CD4-positive, alpha-beta memory T cell (primary cell): ENCODE measurements at regions of chr5 and their contacts with region 1.

Region 1: DNA sequence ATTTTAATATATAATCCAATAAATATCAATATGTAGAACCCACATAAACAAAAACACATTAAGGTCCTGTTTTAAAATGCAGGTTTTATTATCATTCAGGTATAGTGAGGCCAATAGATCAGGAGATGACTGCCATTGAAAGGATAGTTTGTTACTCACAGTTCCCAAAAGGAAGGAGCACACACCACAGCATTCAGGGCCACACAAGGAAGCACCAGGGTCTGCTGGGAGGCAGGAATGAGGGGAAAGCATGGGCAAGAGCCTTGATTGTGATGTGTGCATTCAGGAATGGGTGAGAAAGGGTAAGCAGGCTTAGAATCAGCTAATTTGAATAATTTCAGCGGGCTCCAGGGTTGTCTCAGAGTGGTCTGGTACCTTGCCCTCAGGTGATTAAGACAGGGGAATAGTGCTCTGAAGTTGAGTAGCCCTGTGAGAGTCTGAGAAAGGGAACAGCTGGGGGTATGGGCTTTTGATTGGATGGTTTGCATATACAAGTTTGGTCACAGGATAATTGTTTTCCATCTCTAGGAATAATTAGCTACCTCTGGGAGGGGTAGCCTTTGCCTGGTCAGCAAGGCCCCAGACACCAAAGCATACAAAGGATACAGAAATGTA is 19.8 kb upstream of the OTULIN start:
- DNase-seq: no peak
- H3K4me3 ChIP-seq: no peak overlapping the region
- H3K4me3 Mint-ChIP-seq: no peak overlapping the region
- H3K27ac ChIP-seq: no peak overlapping the region
- H3K27ac Mint-ChIP-seq: no peak overlapping the region
- H3K4me1 ChIP-seq: no peaks in the 10 kb centered on the region
- H3K4me1 Mint-ChIP-seq: no peaks in the 10 kb centered on the region
- H3K27me3 ChIP-seq: peaks cover 4% of the 10 kb centered on the region
- H3K27me3 Mint-ChIP-seq: peaks cover 15 to 27% of the 10 kb centered on the region in 2 donors

Region 2: DNA sequence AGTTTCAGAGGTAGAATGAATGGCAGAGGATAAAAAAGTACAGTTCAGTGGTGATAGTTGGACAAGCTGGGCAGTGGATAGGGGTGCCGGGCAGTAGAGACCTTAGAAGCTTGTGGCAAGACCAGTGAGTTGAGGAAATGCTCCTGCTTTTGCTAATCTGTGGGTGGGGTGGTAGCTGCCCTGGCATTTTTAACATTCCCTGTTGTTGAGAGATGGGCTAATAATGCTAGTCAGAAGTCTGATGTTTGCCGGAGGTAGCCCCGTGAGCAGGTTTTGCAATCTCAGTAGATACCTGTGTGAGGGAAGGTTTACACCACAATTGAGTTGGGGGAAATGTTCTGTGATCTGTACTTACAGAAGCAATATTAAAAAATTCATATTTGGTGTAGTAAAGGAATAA is 410.5 kb before region 1 on chr5:
- CTCF ChIA-PET with region 1: no interaction called
- POLR2A ChIA-PET with region 1: no interaction called
- intact Hi-C with region 1: no loop called
- DNase-seq: no peak
- H3K4me3 ChIP-seq: no peak overlapping the region
- H3K4me3 Mint-ChIP-seq: no peak overlapping the region
- H3K27ac ChIP-seq: no peak overlapping the region
- H3K27ac Mint-ChIP-seq: no peak overlapping the region
- H3K4me1 ChIP-seq: no peaks in the 10 kb centered on the region
- H3K4me1 Mint-ChIP-seq: no peaks in the 10 kb centered on the region
- H3K27me3 ChIP-seq: no peaks in the 10 kb centered on the region
- H3K27me3 Mint-ChIP-seq: peaks cover 2 to 3% of the 10 kb centered on the region in 2 donors

Region 3: DNA sequence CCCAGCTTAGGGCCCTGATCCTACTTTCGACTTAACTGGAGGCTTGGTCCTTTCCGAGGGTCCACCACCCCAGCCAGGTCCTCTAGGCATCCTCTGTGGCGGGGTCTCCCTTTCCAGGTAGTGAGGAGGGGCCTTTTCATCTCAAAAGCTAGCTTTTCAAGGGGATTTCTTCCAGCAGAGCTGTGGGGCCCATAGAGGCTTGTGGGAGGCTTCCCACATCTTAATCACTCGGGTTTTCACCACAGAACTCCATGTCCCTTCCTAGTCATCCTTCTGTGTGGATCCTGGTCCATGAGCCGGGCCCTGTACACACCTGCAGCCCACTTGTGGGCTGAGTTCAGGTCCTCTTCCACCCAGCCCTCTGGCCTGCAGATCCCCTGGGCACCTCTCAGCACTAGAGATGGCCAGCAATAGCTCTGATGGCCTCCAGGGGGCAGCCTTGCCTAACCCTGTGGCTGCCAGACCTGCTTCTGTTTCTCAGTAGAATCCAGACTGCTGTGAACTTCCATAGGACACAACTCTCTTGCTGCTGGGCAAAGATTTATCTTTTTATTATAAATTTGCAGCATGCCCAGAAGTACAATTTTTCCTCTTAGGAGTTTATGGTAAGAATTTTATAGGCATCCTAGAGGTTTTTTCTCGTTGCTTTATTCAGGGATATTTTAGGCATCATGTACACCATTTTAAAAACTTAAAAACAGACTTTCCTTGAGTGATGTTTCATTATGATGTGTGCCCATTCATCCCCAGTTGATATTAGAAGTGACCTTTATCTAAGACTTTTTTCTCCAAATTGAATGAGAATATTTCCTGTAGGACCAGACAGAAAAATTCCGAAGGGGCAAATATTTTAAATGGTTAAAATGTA is 292.7 kb before region 1 on chr5:
- CTCF ChIA-PET with region 1: interaction called, 81 read pairs
- POLR2A ChIA-PET with region 1: no interaction called
- intact Hi-C with region 1: loop called (anchors 1 kb)
- DNase-seq: peak; percentile 46 to 58 (median 57)
- H3K4me3 ChIP-seq: no peak overlapping the region
- H3K4me3 Mint-ChIP-seq: no peak overlapping the region
- H3K27ac ChIP-seq: no peak overlapping the region
- H3K27ac Mint-ChIP-seq: no peak overlapping the region
- H3K4me1 ChIP-seq: no peaks in the 10 kb centered on the region
- H3K4me1 Mint-ChIP-seq: no peaks in the 10 kb centered on the region
- H3K27me3 ChIP-seq: no peaks in the 10 kb centered on the region
- H3K27me3 Mint-ChIP-seq: peaks cover 2% of the 10 kb centered on the region in 2 donors

Region 4: GRCh38 chr5:14374100-14374499 is 270.6 kb before region 1 on chr5:
- CTCF ChIA-PET with region 1: interaction called, 39 read pairs
- POLR2A ChIA-PET with region 1: no interaction called
- intact Hi-C with region 1: no loop called
- DNase-seq: no peak
- H3K4me3 ChIP-seq: no peak overlapping the region
- H3K4me3 Mint-ChIP-seq: no peak overlapping the region
- H3K27ac ChIP-seq: no peak overlapping the region
- H3K27ac Mint-ChIP-seq: no peak overlapping the region
- H3K4me1 ChIP-seq: no peaks in the 10 kb centered on the region
- H3K4me1 Mint-ChIP-seq: no peaks in the 10 kb centered on the region
- H3K27me3 ChIP-seq: no peaks in the 10 kb centered on the region
- H3K27me3 Mint-ChIP-seq: no peaks in the 10 kb centered on the region

Region 5: DNA sequence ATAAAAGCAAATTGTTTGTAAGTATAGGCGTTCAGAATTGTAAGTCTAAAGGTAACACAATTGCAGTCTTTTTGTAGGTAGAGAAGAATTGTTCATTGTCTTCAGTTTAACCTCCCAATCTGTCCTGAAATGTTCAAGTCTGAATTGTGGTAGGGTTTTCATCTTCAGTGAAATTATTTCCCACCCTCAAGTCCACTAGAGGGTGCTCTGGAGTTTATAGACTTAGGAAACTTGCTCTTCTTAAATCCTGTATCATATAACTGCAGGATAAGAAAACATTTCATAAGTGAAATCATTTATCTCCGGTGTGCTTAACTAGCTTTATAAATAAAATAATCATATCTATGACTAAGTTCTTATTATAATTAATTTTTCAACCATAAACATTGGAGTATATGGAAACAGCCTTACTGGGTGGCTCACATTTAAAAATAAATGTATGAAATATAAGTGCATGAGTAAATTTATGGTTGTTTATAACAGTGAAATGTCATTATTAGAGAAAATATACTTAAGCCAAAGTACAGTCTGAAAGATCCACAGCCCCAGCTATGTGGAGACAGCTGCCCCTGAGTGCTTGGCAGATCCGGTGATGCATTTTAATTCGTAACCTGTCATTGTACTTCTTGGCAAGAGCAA is 245.6 kb before region 1 on chr5:
- CTCF ChIA-PET with region 1: interaction called, 175 read pairs
- POLR2A ChIA-PET with region 1: interaction called, 4 read pairs
- intact Hi-C with region 1: loop called (anchors 1 kb)
- DNase-seq: peak in 4 of 5 donors; percentile 27 to 51 (median 44)
- H3K4me3 ChIP-seq: no peak overlapping the region
- H3K4me3 Mint-ChIP-seq: no peak overlapping the region
- H3K27ac ChIP-seq: no peak overlapping the region
- H3K27ac Mint-ChIP-seq: no peak overlapping the region
- H3K4me1 ChIP-seq: no peaks in the 10 kb centered on the region
- H3K4me1 Mint-ChIP-seq: peaks cover 3 to 12% (median 7%) of the 10 kb centered on the region in 4 donors
- H3K27me3 ChIP-seq: no peaks in the 10 kb centered on the region
- H3K27me3 Mint-ChIP-seq: peaks cover 1 to 4% of the 10 kb centered on the region in 2 donors

Region 6: DNA sequence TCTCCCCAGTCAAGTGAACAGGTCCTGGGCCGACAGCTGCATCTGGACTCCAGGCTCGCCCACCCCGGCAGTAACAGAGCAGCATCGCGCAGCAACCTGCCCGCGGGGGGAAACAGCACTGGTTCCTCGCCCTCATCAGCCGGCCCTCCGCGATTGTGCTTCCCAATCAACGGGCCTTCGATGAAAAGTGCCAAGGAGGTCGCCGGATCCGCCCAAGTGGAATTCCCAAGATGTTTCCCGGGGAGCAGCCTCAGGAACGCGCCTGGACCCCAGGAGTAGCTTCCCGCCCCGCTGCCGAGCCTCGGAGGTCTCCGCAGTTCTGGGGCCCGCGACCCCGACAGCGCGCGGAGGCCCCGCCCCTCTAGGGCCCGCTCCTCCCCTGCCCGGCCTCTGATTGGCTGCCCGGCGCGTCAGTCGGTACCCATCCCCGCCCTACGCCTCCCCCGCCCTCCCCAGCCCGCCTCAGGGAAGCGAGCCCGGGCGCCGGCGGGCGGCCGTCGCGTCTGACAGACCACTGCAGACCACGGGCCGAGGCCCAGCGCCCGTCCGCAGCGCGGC is 63.3 kb before region 1 on chr5 and contains the start of gene OTULINL:
- CTCF ChIA-PET with region 1: interaction called, 27 read pairs
- POLR2A ChIA-PET with region 1: interaction called, 6 read pairs
- intact Hi-C with region 1: loop called (anchors 5 kb)
- DNase-seq: peak; percentile 80 to 87 (median 83)
- H3K4me3 ChIP-seq: peak within 1 kb of the TSS; percentile 34 to 67
- H3K4me3 Mint-ChIP-seq: peak within 1 kb of the TSS; percentile 83 to 91 (median 90)
- H3K27ac ChIP-seq: peak within 1 kb of the TSS; percentile 67
- H3K27ac Mint-ChIP-seq: peak within 1 kb of the TSS; percentile 84 to 96 (median 91)
- H3K4me1 ChIP-seq: peaks cover 29% of the 10 kb centered on the region
- H3K4me1 Mint-ChIP-seq: peaks cover 15 to 44% (median 30%) of the 10 kb centered on the region in 4 donors
- H3K27me3 ChIP-seq: no peaks in the 10 kb centered on the region
- H3K27me3 Mint-ChIP-seq: no peaks in the 10 kb centered on the region
- total RNA-seq, gene OTULINL: 24.7 to 26.3 TPM

Region 7: DNA sequence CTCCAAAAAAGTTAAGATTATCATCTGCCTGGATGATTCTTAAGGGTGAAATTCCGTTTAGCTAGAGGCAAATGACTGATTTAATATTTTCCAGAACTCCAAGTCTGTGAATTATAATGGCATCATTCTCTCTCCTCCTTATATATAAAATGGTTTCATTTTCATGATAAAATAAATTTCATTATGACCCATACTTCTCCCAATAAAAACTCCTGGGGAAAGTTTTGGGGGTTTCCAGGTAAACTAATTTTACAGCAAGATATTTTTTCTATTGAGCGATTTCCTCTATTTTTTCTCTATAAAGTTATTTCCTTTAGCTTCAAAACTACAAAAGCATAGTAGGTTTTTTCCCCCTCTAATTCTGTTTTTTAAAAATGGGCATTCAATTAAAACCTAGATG is 12.2 kb after region 1 on chr5:
- CTCF ChIA-PET with region 1: interaction called, 26 read pairs
- POLR2A ChIA-PET with region 1: no interaction called
- intact Hi-C with region 1: no loop called
- DNase-seq: no peak
- H3K4me3 ChIP-seq: no peak overlapping the region
- H3K4me3 Mint-ChIP-seq: no peak overlapping the region
- H3K27ac ChIP-seq: no peak overlapping the region
- H3K27ac Mint-ChIP-seq: no peak overlapping the region
- H3K4me1 ChIP-seq: peaks cover 5% of the 10 kb centered on the region
- H3K4me1 Mint-ChIP-seq: peaks cover 6 to 24% (median 16%) of the 10 kb centered on the region in 4 donors
- H3K27me3 ChIP-seq: no peaks in the 10 kb centered on the region
- H3K27me3 Mint-ChIP-seq: no peaks in the 10 kb centered on the region

Region 8: GRCh38 chr5:14783691-14784206 is 139.0 kb after region 1 on chr5:
- CTCF ChIA-PET with region 1: no interaction called
- POLR2A ChIA-PET with region 1: no interaction called
- intact Hi-C with region 1: no loop called
- DNase-seq: no peak
- H3K4me3 ChIP-seq: no peak overlapping the region
- H3K4me3 Mint-ChIP-seq: no peak overlapping the region
- H3K27ac ChIP-seq: no peak overlapping the region
- H3K27ac Mint-ChIP-seq: peak overlapping the region in 2 of 7 donors; percentile 29 to 42
- H3K4me1 ChIP-seq: no peaks in the 10 kb centered on the region
- H3K4me1 Mint-ChIP-seq: peaks cover 30 to 73% (median 44%) of the 10 kb centered on the region in 4 donors
- H3K27me3 ChIP-seq: no peaks in the 10 kb centered on the region
- H3K27me3 Mint-ChIP-seq: no peaks in the 10 kb centered on the region

Region 9: DNA sequence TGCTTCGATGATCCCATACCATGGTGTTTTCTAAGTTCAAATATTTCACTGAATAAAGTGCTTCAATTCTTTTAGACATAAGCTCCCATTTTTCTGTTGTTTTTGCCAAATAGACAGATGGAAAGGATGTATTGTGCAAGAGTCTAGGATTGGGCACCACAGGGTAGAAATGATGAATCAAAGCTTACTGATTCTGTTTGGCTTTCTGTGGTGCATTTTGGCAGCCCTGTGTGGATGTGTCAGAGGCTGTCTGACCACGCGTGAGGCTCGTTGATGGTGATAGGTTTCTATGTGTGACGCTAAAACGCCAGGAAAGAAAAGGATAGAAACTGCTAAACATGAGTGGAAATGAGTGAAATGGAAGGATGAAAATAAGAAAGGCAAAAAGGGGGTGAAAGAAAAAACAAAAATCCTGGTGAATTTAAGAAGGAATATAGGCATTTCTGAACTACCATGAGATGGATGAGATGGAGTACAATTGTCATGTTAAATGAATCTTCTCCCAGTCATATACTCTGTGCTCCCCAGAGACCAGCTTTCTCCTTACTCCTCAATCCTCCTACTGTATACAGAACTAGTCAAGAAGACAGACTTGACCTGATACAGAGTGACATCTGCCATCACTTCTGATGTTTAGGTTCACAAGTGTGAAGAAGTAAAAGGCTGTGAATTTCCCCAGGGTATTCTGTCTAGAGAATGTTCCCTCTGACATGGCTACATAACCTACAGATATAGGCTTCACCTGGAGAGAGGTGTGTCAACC is 172.4 kb after region 1 on chr5:
- CTCF ChIA-PET with region 1: no interaction called
- POLR2A ChIA-PET with region 1: no interaction called
- intact Hi-C with region 1: no loop called
- DNase-seq: no peak
- H3K4me3 ChIP-seq: no peak overlapping the region
- H3K4me3 Mint-ChIP-seq: no peak overlapping the region
- H3K27ac ChIP-seq: no peak overlapping the region
- H3K27ac Mint-ChIP-seq: peak overlapping the region in 2 of 7 donors; percentile 21 to 53
- H3K4me1 ChIP-seq: peaks cover 24% of the 10 kb centered on the region
- H3K4me1 Mint-ChIP-seq: peaks cover 50 to 80% (median 60%) of the 10 kb centered on the region in 4 donors
- H3K27me3 ChIP-seq: no peaks in the 10 kb centered on the region
- H3K27me3 Mint-ChIP-seq: no peaks in the 10 kb centered on the region